PC-9 (cell line): ENCODE measurements at regions of chr4 and their contacts with region 1.

Region 1: GRCh38 chr4:94540471-94540870 is 88.7 kb downstream of the PDLIM5 start:
- DNase-seq: peak; percentile 48 to 86
- H3K4me3 ChIP-seq: no peak overlapping the region
- H3K27ac ChIP-seq: peak overlapping the region; percentile 75
- H3K4me1 ChIP-seq: peaks cover 49% of the 10 kb centered on the region
- H3K27me3 ChIP-seq: no peaks in the 10 kb centered on the region
- CTCF ChIP-seq: no peak

Region 2: GRCh38 chr4:94171616-94172015 is 368.9 kb before region 1 on chr4:
- CTCF ChIA-PET with region 1: no interaction called
- POLR2A ChIA-PET with region 1: no interaction called
- intact Hi-C with region 1: no loop called
- DNase-seq: no peak
- H3K4me3 ChIP-seq: no peak overlapping the region
- H3K27ac ChIP-seq: no peak overlapping the region
- H3K4me1 ChIP-seq: no peaks in the 10 kb centered on the region
- H3K27me3 ChIP-seq: no peaks in the 10 kb centered on the region
- CTCF ChIP-seq: peak; percentile 59

Region 3: GRCh38 chr4:94472056-94472824 is 68.2 kb before region 1 on chr4:
- CTCF ChIA-PET with region 1: no interaction called
- POLR2A ChIA-PET with region 1: no interaction called
- intact Hi-C with region 1: no loop called
- DNase-seq: peak in 1 of 2 experiments; percentile 47
- H3K4me3 ChIP-seq: no peak overlapping the region
- H3K27ac ChIP-seq: no peak overlapping the region
- H3K4me1 ChIP-seq: no peaks in the 10 kb centered on the region; the same call in 1 of the 2 replicates
- H3K27me3 ChIP-seq: no peaks in the 10 kb centered on the region
- CTCF ChIP-seq: no peak

Region 4: DNA sequence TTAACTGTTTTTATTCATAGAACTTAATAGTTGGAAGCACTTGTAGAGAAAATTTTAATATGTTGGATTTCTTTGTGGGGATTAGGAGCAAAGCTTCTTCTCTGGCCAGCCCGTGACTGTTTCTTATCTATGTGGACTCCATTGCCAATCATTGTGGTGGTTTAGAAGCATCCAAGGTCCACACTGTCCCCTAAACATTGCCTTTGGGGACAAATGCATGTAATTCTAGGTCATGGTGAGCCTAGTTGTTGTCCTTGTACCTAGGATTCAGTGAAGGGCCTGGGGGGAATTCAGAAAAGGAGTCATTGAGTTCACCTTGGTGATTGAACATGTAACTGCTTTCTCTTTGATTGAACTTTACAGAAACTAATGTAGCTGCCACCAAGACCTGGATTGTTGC is 19.4 kb after region 1 on chr4:
- CTCF ChIA-PET with region 1: no interaction called
- POLR2A ChIA-PET with region 1: no interaction called
- intact Hi-C with region 1: loop called (anchors 1 kb)
- DNase-seq: no peak
- H3K4me3 ChIP-seq: no peak overlapping the region
- H3K27ac ChIP-seq: no peak overlapping the region
- H3K4me1 ChIP-seq: peaks cover 21% of the 10 kb centered on the region
- H3K27me3 ChIP-seq: no peaks in the 10 kb centered on the region
- CTCF ChIP-seq: no peak